Vagina (tissue), 2 donors: ENCODE measurements at regions of chr10 and their contacts with region 1.

Region 1: GRCh38 chr10:88499569-88500470 is 83.3 kb downstream of the RNLS start:
- DNase-seq: no peak
- H3K4me3 ChIP-seq: no peak overlapping the region
- H3K27ac ChIP-seq: no peak overlapping the region
- H3K4me1 ChIP-seq: no peaks in the 10 kb centered on the region
- H3K27me3 ChIP-seq: no peaks in the 10 kb centered on the region
- CTCF ChIP-seq: no peak
- POLR2A ChIP-seq: no peak

Region 2: GRCh38 chr10:88309365-88309764 is 190.5 kb before region 1 on chr10:
- intact Hi-C with region 1: loop called (anchors 5 kb)
- DNase-seq: no peak
- H3K4me3 ChIP-seq: no peak overlapping the region
- H3K27ac ChIP-seq: no peak overlapping the region
- H3K4me1 ChIP-seq: no peaks in the 10 kb centered on the region
- H3K27me3 ChIP-seq: no peaks in the 10 kb centered on the region
- CTCF ChIP-seq: no peak
- POLR2A ChIP-seq: no peak